ENCODE measurements at regions of chr12 and their contacts with region 1.

Region 1: GRCh38 chr12:31504625-31505222 is 86.2 kb downstream of the DENND5B start:
- DNase-seq: no peak
- ATAC-seq: no peak

Region 2: GRCh38 chr12:29655861-29656260 is 1848.9 kb before region 1 on chr12:
- intact Hi-C with region 1: no loop called
- DNase-seq: no peak
- ATAC-seq: no peak

Region 3: DNA sequence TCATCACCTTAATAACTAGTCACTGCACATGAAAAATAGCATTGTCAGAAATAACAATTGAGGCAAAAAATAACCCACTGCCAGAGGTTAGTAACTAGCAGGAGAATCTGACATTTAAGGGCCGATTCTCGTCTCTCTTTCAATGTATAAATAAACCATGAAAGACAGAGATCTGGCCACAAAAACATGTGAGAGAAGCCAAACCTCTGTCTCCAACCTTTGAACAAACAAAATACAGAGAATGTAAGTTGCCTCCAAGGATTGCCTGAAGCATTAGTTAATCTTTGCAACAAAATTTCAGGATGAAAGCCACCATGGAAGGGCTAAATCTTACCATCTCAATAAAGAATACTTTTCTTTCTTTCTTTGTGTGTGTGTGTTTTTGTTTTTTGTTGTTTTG is 1463.6 kb before region 1 on chr12:
- intact Hi-C with region 1: no loop called
- DNase-seq: no peak
- ATAC-seq: no peak

Region 4: GRCh38 chr12:31647086-31647491 is 142.4 kb after region 1 on chr12:
- intact Hi-C with region 1: no loop called
- DNase-seq: no peak
- ATAC-seq: peak; percentile 17

Region 5: DNA sequence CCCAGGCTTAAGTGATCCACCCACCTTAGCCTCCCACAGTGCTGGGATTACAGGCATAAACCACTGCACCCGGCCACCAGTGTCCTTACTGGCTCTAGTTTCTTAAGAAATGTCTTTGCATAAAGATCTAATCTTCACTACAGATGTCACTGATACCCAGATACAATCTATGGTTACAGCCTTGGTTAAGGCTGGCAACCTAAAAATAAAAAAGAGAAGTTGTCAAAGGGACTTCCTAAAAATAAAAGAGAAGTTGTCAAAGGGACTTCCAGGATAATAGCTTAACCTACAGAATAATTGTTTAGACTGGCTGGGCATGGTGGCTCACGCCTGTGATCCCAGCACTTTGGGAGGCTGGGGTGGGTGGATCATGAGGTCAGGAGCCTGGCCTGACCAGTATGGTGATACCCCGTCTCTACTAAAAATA is 182.4 kb after region 1 on chr12:
- intact Hi-C with region 1: loop called (anchors 5 kb)
- DNase-seq: no peak
- ATAC-seq: no peak

Region 6: GRCh38 chr12:31749024-31749704 is 244.4 kb after region 1 on chr12:
- intact Hi-C with region 1: no loop called
- DNase-seq: no peak
- ATAC-seq: peak; percentile 79

Measured in sciatic nerve (tissue), 2 donors.